ENCODE measurements at regions of chr6 and their contacts with region 1.

Region 1: DNA sequence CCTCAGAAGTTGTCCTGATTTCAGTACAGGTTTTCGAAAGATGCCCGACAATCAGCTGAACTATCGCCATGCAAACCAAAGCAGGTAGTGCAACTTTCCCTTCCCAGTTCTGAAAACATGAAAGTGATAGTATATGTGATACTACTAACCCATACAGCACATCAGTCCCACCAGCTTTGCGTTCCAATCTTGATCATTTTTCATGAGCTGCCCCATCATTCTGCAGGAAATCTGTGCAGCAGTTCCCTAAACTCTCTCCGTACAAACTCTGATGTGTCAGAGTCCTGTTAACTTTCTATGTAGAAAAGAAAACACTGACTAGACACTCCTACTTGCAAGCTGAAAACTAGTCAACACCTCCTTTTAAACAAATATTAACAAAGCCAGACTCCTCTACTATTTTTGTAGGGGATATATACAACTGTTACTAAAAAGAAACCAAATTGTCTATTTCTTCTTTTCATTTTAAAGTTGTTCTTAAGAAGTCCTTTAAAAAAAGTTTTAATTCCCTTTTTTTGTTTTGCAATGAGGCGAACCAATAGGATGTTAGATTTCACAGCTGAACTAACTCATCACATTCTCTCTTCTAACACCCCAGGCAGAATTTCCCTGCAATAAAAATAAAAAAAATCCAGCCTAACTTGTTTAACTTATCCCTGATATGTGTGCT is 99.6 kb upstream of the DST start:
- DNase-seq: peak; percentile 18
- CTCF ChIP-seq: no peak

Region 2: GRCh38 chr6:56642366-56643261 is 99.6 kb before region 1 on chr6 and contains the start of gene DST:
- CTCF ChIA-PET with region 1: no interaction called
- POLR2A ChIA-PET with region 1: no interaction called
- DNase-seq: no peak
- CTCF ChIP-seq: no peak

Region 3: DNA sequence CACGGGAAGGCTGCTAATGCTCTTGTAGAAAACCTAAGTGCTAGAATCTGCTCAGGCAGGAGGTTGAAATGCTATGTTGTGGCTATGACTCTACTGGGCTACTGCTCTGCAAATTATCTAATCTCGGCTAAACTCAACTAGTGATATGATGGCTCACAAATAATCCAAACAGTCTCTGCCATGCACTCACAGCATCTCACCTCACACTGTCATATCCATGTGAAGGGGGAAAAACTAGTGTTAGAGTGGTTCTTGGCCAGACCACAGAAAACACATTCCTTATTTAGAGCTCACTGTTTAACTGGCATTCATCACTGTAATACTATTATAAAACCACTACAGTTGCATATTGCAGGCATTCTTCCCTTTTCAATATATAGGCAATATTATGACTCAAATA is 17.8 kb before region 1 on chr6:
- CTCF ChIA-PET with region 1: interaction called, 12 read pairs
- POLR2A ChIA-PET with region 1: no interaction called
- DNase-seq: no peak
- CTCF ChIP-seq: no peak

Region 4: DNA sequence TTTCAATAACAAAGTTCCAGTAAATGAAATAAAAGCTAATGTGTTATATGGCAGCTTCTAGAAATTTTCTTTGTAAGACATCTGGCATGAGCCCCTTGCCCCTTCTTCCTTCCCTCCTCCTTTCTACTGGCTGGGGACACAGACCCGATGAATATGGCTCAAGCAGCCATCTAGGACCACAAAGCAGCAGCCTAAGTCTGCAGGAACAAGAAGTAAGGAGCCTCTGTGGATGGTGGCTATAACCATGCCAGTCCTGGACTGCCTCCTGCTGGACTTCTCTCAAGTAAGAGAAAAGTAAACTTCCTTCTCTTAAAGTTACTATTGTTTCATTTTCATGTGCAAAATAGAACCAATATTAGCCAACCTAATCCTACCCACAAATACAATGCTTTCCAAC is 15.3 kb after region 1 on chr6:
- CTCF ChIA-PET with region 1: interaction called, 80 read pairs
- POLR2A ChIA-PET with region 1: no interaction called
- DNase-seq: no peak
- CTCF ChIP-seq: peak; percentile 36